H1 (cell line): ENCODE measurements at regions of chr20 and their contacts with region 1.

Region 1: GRCh38 chr20:10434467-10434831 is 427 bp upstream of the MKKS start:
- DNase-seq: peak; percentile 85 to 92
- H3K4me3 ChIP-seq: peak overlapping the region; percentile 57 to 88 (median 76)
- H3K27ac ChIP-seq: peak overlapping the region; percentile 70
- H3K4me1 ChIP-seq: no peaks in the 10 kb centered on the region
- H3K27me3 ChIP-seq: no peaks in the 10 kb centered on the region
- CTCF ChIP-seq: no peak
- EP300 ChIP-seq: no peak
- POLR2A ChIP-seq: peak; percentile 86 to 91; a peak in 2 of 3 replicates
- RAD21 ChIP-seq: no peak

Region 2: DNA sequence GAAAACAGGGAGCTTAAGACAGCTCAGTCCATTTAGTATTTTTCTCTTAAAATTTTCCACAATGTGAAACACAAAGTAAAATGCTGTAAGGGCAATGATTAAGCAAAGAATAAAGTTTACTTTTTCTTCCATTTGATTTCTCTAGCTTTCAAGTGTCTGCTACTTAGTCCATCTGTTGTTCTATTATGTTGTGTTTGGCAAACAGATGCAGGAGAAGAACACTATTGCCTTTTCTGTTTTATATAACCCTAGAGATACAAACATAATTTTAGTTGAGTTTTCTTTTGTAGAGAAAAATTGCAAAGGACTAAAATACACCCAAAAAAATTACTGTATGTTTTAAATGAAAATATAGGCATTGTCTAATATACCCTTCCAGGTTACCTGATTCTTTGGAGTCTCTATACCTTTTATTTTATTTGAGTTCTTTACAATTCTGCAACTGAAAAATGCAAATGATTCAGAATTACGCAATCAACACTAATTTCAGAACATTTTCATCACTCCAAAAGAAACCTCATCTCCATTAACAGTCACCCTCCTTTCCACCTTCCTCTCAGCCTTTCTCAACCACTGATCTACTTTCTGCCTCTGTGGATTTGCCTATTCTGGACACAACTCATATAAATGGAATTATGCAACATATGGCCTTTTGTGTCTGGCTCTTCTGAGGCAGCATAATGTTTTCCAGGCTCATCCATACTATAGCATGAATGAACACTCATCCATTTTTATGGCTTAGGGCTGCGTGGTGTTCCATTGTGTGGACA is 97.3 kb before region 1 on chr20:
- CTCF ChIA-PET with region 1: no interaction called
- POLR2A ChIA-PET with region 1: no interaction called
- DNase-seq: no peak
- H3K4me3 ChIP-seq: no peak overlapping the region
- H3K27ac ChIP-seq: no peak overlapping the region
- H3K4me1 ChIP-seq: peaks cover 0 to 4% (median 2%) of the 10 kb centered on the region in 4 experiments; a peak in 2 of 7 replicates
- H3K27me3 ChIP-seq: no peaks in the 10 kb centered on the region
- CTCF ChIP-seq: no peak
- EP300 ChIP-seq: no peak
- POLR2A ChIP-seq: no peak
- RAD21 ChIP-seq: no peak

Region 3: DNA sequence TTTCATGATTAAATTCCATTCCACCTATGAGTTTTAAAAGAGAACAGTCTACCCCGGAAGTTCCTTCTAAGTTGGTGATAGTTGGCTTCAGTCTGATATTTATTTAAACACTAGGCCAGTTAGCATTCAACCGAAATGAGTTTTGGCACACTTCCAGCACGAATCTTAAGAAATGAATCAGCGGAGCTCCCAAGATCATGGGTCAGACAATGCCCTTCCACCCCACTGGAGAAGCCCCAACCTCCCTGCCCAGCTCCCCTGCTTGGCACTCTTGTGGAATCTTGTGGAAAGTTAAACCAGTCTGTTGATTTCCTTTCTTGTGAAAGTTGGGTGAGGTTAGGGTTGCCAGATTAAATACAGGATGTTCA is 64.7 kb before region 1 on chr20:
- CTCF ChIA-PET with region 1: no interaction called
- POLR2A ChIA-PET with region 1: no interaction called
- DNase-seq: no peak
- H3K4me3 ChIP-seq: no peak overlapping the region
- H3K27ac ChIP-seq: no peak overlapping the region
- H3K4me1 ChIP-seq: no peaks in the 10 kb centered on the region; a peak in 1 of 7 replicates
- H3K27me3 ChIP-seq: no peaks in the 10 kb centered on the region
- CTCF ChIP-seq: no peak
- EP300 ChIP-seq: no peak
- POLR2A ChIP-seq: no peak
- RAD21 ChIP-seq: no peak

Region 4: DNA sequence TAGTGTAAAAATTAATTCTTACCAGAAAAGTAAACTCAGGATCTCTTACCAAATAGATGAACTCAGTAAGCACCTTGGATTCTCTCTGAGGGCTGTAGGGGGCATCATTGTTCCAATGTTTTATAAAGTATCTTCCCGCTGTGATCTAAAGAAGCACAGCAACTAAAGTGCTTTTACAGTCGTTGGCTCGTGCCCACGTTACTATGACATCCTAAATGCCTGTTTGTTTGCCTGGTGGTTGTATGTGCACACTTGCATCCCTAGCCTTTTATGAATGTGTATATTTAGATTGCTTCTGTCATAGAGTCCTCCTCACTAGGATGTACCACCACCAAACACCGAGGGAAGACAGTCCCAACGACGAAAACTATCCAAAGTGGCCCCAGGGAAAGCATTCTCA is 35.1 kb after region 1 on chr20:
- CTCF ChIA-PET with region 1: interaction called, 3 read pairs
- POLR2A ChIA-PET with region 1: interaction called, 10 read pairs
- DNase-seq: peak in 1 of 2 experiments; percentile 23
- H3K4me3 ChIP-seq: no peak overlapping the region; a peak in 1 of 8 replicates
- H3K27ac ChIP-seq: no peak overlapping the region
- H3K4me1 ChIP-seq: peaks cover 0 to 30% (median 22%) of the 10 kb centered on the region in 4 experiments; a peak in 6 of 7 replicates
- H3K27me3 ChIP-seq: no peaks in the 10 kb centered on the region
- CTCF ChIP-seq: peak in 2 of 3 experiments; percentile 57 to 66; a peak in 2 of 4 replicates
- EP300 ChIP-seq: no peak
- POLR2A ChIP-seq: no peak
- RAD21 ChIP-seq: peak; percentile 75 to 76